Naive thymus-derived CD4-positive, alpha-beta T cell (primary cell): ENCODE measurements at regions of chr10 and their contacts with region 1.

Region 1: DNA sequence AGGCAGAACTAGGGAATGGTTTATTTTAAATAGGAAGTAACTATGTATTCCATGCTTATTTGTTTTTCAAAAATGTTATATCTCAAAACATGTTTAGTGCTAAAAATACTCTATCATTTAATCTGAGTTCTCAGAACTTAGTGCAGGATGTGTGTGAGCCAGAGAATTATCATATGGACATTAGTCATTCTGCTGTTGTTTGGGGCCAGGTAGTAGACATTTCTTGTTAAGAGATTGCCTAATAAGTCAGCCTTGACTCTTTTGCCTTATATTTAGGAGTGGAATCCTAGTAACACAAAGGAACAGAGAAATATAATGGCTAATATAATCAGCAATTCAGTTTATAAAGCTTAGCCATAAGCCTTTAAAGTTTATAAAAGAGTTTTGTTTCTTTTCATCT is 149.8 kb downstream of the CCSER2 start:
- DNase-seq: no peak
- ATAC-seq: no peak
- H3K4me3 ChIP-seq: no peak overlapping the region
- H3K4me3 Mint-ChIP-seq: no peak overlapping the region
- H3K27ac ChIP-seq: no peak overlapping the region
- H3K27ac Mint-ChIP-seq: peak overlapping the region in 2 of 9 donors; percentile 7 to 75
- H3K4me1 ChIP-seq: no peaks in the 10 kb centered on the region
- H3K4me1 Mint-ChIP-seq: peaks cover 4 to 16% (median 9%) of the 10 kb centered on the region in 7 donors
- H3K27me3 ChIP-seq: no peaks in the 10 kb centered on the region
- H3K27me3 Mint-ChIP-seq: no peaks in the 10 kb centered on the region

Region 2: DNA sequence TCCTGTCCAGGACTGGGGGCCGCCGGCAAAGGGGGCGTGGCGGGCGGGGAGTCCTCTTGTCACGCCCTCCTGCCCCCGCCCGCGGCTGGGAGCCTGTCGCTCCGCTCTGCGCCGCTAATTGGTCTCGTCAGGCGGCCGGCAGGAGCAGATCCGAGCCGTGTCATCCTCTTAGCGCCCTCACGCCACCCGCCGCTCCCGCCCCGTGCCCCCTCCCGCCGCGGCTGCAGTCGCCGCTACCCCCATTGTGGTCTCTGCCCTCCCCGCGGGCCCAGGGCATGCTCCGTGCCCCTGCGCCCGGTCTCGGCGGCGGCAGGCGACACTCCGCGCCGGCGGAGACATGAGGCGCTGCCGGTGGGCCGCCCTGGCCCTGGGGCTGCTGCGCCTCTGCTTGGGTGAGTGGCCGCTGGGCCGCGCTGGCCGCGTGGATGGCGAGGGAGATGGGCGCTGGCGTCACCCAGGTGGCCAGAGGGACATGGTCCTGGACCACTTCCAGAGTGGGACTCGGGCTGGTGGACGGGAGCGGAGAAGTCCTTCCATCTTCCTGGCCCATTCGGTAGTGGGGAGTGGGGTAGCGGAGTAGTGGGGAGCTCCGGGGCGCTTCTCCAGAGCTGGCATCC is 283.6 kb before region 1 on chr10 and contains the start of gene CDHR1:
- CTCF ChIA-PET with region 1: no interaction called
- POLR2A ChIA-PET with region 1: no interaction called
- intact Hi-C with region 1: no loop called
- DNase-seq: peak in 7 of 9 donors; percentile 12 to 49 (median 37)
- ATAC-seq: peak; percentile 79
- H3K4me3 ChIP-seq: peak within 1 kb of the TSS; percentile 52
- H3K4me3 Mint-ChIP-seq: peak within 1 kb of the TSS; percentile 47 to 75 (median 65)
- H3K27ac ChIP-seq: no peak within 1 kb of the TSS
- H3K27ac Mint-ChIP-seq: peak within 1 kb of the TSS in 1 of 9 donors; percentile 28
- H3K4me1 ChIP-seq: peaks cover 18 to 24% of the 10 kb centered on the region in 2 donors
- H3K4me1 Mint-ChIP-seq: peaks cover 12 to 28% (median 16%) of the 10 kb centered on the region in 7 donors
- H3K27me3 ChIP-seq: peaks cover 0 to 3% of the 10 kb centered on the region in 2 donors
- H3K27me3 Mint-ChIP-seq: peaks cover 0 to 59% (median 22%) of the 10 kb centered on the region in 5 donors
- total RNA-seq, gene CDHR1: 0.15 to 1.6 (median 0.43) TPM in 4 of 5 experiments, not detected in the other

Region 3: DNA sequence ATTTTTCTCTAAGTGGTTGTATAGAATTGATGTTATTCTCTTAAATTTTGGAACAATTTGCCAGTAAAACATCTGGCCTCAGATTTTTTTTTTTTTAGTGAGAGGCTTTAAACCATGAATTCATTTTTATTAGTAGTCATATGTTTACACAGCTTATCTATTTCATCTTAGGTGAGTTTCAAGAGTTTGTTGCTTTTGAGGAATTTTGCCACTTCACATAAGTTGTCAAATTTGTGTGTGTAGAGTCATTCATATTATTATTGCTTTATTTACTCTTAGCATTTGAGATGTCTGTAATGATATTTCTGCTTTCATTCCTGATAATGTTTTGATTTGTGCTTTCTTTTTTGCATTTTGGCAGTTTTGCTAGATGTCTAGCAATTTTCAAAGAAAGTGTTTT is 17.6 kb before region 1 on chr10:
- CTCF ChIA-PET with region 1: no interaction called
- POLR2A ChIA-PET with region 1: no interaction called
- intact Hi-C with region 1: loop called in 1 of 2 experiments (anchors 2 kb)
- DNase-seq: no peak
- ATAC-seq: no peak
- H3K4me3 ChIP-seq: no peak overlapping the region
- H3K4me3 Mint-ChIP-seq: no peak overlapping the region
- H3K27ac ChIP-seq: no peak overlapping the region
- H3K27ac Mint-ChIP-seq: no peak overlapping the region
- H3K4me1 ChIP-seq: peaks cover 0 to 5% of the 10 kb centered on the region in 2 donors
- H3K4me1 Mint-ChIP-seq: peaks cover 6 to 32% (median 22%) of the 10 kb centered on the region in 7 donors
- H3K27me3 ChIP-seq: no peaks in the 10 kb centered on the region
- H3K27me3 Mint-ChIP-seq: no peaks in the 10 kb centered on the region